Activated CD4-positive, alpha-beta T cell treated with anti-CD3 and anti-CD28 coated beads for 36 hours (primary cell): ENCODE measurements at regions of chr11 and their contacts with region 1.

Region 1: GRCh38 chr11:59053387-59053786 is 32.7 kb upstream of the GLYATL1B start:
- DNase-seq: peak; percentile 89
- ATAC-seq: peak; percentile 75
- H3K4me3 Mint-ChIP-seq: no peak overlapping the region
- H3K27ac Mint-ChIP-seq: no peak overlapping the region
- H3K4me1 Mint-ChIP-seq: peaks cover 6% of the 10 kb centered on the region
- H3K27me3 Mint-ChIP-seq: peaks cover 9% of the 10 kb centered on the region

Region 2: DNA sequence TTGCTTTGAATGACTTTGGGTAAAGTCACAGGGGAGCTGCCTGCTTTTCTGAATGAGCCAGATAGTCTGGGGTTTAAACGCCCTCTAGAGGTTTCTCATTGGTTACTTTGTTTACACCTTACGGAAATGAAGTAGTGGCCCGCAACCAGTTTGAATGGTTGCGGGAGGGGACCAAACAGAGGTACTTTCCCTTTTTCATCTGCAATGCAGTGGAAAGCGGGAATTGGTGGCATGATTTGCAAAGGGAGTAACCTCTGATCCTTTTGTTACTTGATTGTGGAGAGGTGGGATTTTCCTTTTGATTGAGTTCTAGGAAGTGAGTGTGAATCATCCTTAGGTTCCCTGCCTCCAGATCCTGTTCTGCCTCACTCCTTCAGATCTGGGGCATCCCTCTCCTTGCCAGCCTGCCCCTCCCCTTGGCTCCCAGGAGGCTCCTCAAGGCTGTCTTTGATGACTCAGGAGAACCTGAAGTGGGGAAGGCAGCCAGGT is 130.0 kb before region 1 on chr11:
- CTCF ChIA-PET with region 1: interaction called, 3 read pairs
- POLR2A ChIA-PET with region 1: no interaction called
- intact Hi-C with region 1: loop called in 1 of 2 experiments (anchors 5 kb)
- DNase-seq: peak; percentile 50
- ATAC-seq: peak; percentile 87
- H3K4me3 Mint-ChIP-seq: no peak overlapping the region
- H3K27ac Mint-ChIP-seq: no peak overlapping the region
- H3K4me1 Mint-ChIP-seq: peaks cover 24% of the 10 kb centered on the region
- H3K27me3 Mint-ChIP-seq: peaks cover 3% of the 10 kb centered on the region

Region 3: GRCh38 chr11:58958500-58958899 is 94.9 kb before region 1 on chr11:
- CTCF ChIA-PET with region 1: interaction called, 6 read pairs
- POLR2A ChIA-PET with region 1: no interaction called
- intact Hi-C with region 1: loop called in 1 of 2 experiments (anchors 1 kb)
- DNase-seq: peak; percentile 68
- ATAC-seq: peak; percentile 51
- H3K4me3 Mint-ChIP-seq: no peak overlapping the region
- H3K27ac Mint-ChIP-seq: no peak overlapping the region
- H3K4me1 Mint-ChIP-seq: peaks cover 7% of the 10 kb centered on the region
- H3K27me3 Mint-ChIP-seq: peaks cover 5% of the 10 kb centered on the region